MCF 10A (cell line): ENCODE measurements at regions of chr12 and their contacts with region 1.

Region 1: GRCh38 chr12:49088190-49088931 is 6.2 kb downstream of the DHH start:
- DNase-seq: peak; percentile 93
- H3K4me3 Mint-ChIP-seq: no peak overlapping the region
- H3K27ac Mint-ChIP-seq: no peak overlapping the region
- H3K4me1 Mint-ChIP-seq: peaks cover 8% of the 10 kb centered on the region
- H3K27me3 Mint-ChIP-seq: no peaks in the 10 kb centered on the region
- CTCF ChIP-seq: peak; percentile 79

Region 2: DNA sequence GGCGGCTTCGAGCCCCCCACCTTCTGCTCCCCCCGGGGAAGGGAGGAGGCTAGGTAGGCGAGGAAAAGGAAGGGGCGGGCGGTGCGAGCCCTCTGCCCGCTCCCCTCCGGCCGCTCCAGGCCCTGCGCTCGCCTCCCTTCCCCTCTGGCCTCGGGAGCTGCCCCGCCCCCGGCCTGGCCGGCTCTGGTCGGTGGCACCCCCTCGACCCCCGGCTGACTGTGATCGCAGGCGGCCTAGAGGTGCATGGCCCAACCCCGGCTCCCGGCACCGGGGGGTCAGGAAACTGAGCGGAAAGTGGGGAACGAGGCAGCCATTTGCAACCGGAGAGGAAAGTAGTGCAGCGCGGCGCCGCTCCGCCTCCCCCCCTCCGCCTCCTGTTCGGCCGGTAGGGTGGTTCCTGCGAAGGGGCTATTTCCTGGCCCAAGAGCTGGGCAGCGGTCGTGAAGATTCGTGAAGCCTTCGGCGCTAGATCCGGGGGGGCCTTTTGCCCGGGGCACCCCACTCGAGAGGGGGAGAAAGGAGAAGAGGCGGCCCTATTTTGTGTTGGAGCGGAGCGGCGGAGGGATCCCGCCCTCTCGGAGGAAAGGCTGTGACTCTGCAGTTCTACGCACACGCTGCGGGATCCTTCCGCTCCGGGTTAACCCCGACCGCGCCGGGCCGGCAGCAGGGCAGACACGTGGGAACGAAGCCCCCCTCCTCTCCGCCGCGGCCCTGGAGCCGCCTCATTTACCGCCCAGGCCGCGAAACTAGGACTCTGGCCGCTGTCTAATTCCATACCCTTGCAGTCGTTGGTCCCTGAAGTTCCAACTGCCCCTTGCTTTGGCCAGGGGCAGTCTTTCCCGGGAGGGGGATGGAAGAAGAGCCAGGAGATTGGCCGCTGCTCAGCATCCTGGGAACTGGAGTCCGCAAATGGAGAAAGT is 27.9 kb before region 1 on chr12 and contains the start of gene KMT2D:
- CTCF ChIA-PET with region 1: interaction called, 46 read pairs
- POLR2A ChIA-PET with region 1: interaction called, 8 read pairs
- intact Hi-C with region 1: loop called (anchors 1 kb)
- DNase-seq: peak; percentile 91
- H3K4me3 Mint-ChIP-seq: peak within 1 kb of the TSS; percentile 91
- H3K27ac Mint-ChIP-seq: peak within 1 kb of the TSS; percentile 89
- H3K4me1 Mint-ChIP-seq: peaks cover 32% of the 10 kb centered on the region
- H3K27me3 Mint-ChIP-seq: no peaks in the 10 kb centered on the region
- CTCF ChIP-seq: no peak
- total RNA-seq, gene KMT2D: 76.9 and 92.5 TPM in 2 replicates

Region 3: DNA sequence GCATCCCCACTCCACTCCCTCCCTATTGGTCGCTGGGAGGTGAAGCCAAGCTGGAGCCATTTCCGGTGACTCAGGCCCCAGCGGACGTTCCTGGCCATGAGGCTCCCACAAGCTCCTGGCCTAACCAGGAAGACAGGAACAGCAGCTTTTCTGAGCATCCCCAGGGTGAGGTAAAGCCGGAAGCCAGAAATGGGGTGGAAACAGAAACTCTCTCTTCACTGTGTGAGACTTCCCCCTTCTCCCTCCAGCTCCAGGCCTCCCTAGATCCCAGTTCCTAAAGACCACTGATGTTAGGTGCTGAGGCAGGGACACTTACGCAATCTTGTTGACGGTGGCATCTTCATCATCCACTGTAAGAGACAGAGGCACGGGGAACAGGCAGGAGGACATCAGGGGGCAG is 17.2 kb after region 1 on chr12:
- CTCF ChIA-PET with region 1: interaction called, 99 read pairs
- POLR2A ChIA-PET with region 1: interaction called, 24 read pairs
- intact Hi-C with region 1: no loop called
- DNase-seq: no peak
- H3K4me3 Mint-ChIP-seq: no peak overlapping the region
- H3K27ac Mint-ChIP-seq: no peak overlapping the region
- H3K4me1 Mint-ChIP-seq: peaks cover 23% of the 10 kb centered on the region
- H3K27me3 Mint-ChIP-seq: no peaks in the 10 kb centered on the region
- CTCF ChIP-seq: no peak

Region 4: GRCh38 chr12:49121047-49121696 is 32.8 kb after region 1 on chr12:
- CTCF ChIA-PET with region 1: interaction called, 71 read pairs
- POLR2A ChIA-PET with region 1: interaction called, 6 read pairs
- intact Hi-C with region 1: loop called (anchors 1 kb)
- DNase-seq: peak; percentile 78
- H3K4me3 Mint-ChIP-seq: no peak overlapping the region
- H3K27ac Mint-ChIP-seq: no peak overlapping the region
- H3K4me1 Mint-ChIP-seq: no peaks in the 10 kb centered on the region
- H3K27me3 Mint-ChIP-seq: no peaks in the 10 kb centered on the region
- CTCF ChIP-seq: peak; percentile 57

Region 5: GRCh38 chr12:49188914-49189367 is 100.6 kb after region 1 on chr12 and contains the start of gene TUBA1A:
- CTCF ChIA-PET with region 1: interaction called, 12 read pairs
- POLR2A ChIA-PET with region 1: interaction called, 3 read pairs
- intact Hi-C with region 1: no loop called
- DNase-seq: peak; percentile 68
- H3K4me3 Mint-ChIP-seq: peak within 1 kb of the TSS; percentile 91
- H3K27ac Mint-ChIP-seq: peak within 1 kb of the TSS; percentile 89
- H3K4me1 Mint-ChIP-seq: peaks cover 12% of the 10 kb centered on the region
- H3K27me3 Mint-ChIP-seq: peaks cover 22% of the 10 kb centered on the region
- CTCF ChIP-seq: no peak
- total RNA-seq, gene TUBA1A: 9.8 and 10.4 TPM in 2 replicates

Region 6: GRCh38 chr12:49232940-49233841 is 144.8 kb after region 1 on chr12:
- CTCF ChIA-PET with region 1: interaction called, 15 read pairs
- POLR2A ChIA-PET with region 1: interaction called, 8 read pairs
- intact Hi-C with region 1: loop called (anchors 1 kb)
- DNase-seq: no peak
- H3K4me3 Mint-ChIP-seq: peak overlapping the region; percentile 32
- H3K27ac Mint-ChIP-seq: no peak overlapping the region
- H3K4me1 Mint-ChIP-seq: peaks cover 5% of the 10 kb centered on the region
- H3K27me3 Mint-ChIP-seq: no peaks in the 10 kb centered on the region
- CTCF ChIP-seq: no peak

Region 7: GRCh38 chr12:49604856-49605255 is 516.5 kb after region 1 on chr12:
- CTCF ChIA-PET with region 1: no interaction called
- POLR2A ChIA-PET with region 1: no interaction called
- intact Hi-C with region 1: no loop called
- DNase-seq: no peak
- H3K4me3 Mint-ChIP-seq: no peak overlapping the region
- H3K27ac Mint-ChIP-seq: no peak overlapping the region
- H3K4me1 Mint-ChIP-seq: no peaks in the 10 kb centered on the region
- H3K27me3 Mint-ChIP-seq: no peaks in the 10 kb centered on the region
- CTCF ChIP-seq: no peak